ENCODE measurements at regions of chr10 and their contacts with region 1.

Region 1: DNA sequence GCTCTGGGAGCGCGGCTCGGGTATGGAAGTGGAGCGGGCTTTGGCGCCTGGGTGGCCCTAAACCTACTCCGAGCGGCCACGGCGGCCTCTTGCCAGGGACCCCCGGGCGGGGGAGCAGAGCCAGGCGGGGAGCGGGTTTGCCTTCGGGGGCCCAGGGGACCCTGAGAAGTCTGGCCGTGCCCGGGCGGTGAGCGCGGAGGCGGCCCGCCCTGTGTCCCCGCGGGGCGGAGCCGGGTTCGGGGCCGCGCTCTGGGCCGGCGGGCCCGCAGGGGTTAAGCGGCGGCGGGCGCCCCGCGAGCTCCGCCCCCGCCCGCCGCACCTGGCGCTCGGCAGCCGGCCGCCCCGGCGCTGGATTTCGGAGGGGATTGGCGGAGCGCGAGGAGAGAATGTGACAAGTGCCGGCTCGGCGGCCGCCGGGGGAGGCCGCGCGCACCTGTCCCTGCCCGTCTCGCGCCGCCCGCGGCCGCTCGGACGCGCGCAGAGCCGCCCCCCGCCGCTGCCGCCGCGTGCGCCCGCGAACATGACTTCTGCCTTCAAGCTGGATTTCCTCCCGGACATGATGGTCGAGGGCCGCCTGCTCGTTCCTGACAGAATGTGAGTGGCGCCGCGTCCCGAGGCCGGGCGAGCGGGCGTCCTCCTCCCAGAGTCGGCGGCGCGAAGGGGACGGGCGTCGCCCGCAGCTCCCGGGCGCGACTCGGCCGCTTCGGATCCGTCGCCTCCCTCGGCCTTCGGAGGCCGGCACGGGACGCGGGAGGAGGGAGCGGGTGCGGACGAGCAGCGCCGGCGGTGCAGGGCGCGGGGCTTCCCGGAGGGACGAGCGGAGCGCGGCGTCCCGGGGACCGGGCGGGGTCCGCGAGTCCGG is at the start of gene CELF2:
- DNase-seq: peak; percentile 64
- H3K4me3 ChIP-seq: peak within 1 kb of the TSS; percentile 77 to 91 (median 88)
- H3K27ac ChIP-seq: peak within 1 kb of the TSS; percentile 71
- H3K4me1 ChIP-seq: peaks cover 9% of the 10 kb centered on the region
- H3K27me3 ChIP-seq: no peaks in the 10 kb centered on the region
- CTCF ChIP-seq: no peak
- POLR2A ChIP-seq: peak; percentile 26
- total RNA-seq, gene CELF2: 35.5 and 42.6 TPM in 2 replicates

Region 2: GRCh38 chr10:10613656-10614244 is 404.1 kb before region 1 on chr10:
- CTCF ChIA-PET with region 1: no interaction called
- POLR2A ChIA-PET with region 1: no interaction called
- dilution Hi-C with region 1: no loop called
- intact Hi-C with region 1: loop called (anchors 5 kb)
- DNase-seq: peak; percentile 27
- H3K4me3 ChIP-seq: no peak overlapping the region
- H3K27ac ChIP-seq: no peak overlapping the region
- H3K4me1 ChIP-seq: peaks cover 6% of the 10 kb centered on the region
- H3K27me3 ChIP-seq: peaks cover 6 to 27% of the 10 kb centered on the region in 2 experiments
- CTCF ChIP-seq: no peak
- POLR2A ChIP-seq: no peak

Region 3: GRCh38 chr10:10792681-10793080 is 225.1 kb before region 1 on chr10:
- CTCF ChIA-PET with region 1: interaction called, 3 read pairs
- POLR2A ChIA-PET with region 1: interaction called, 3 read pairs
- dilution Hi-C with region 1: no loop called
- intact Hi-C with region 1: loop called (anchors 5 kb)
- DNase-seq: peak; percentile 89
- H3K4me3 ChIP-seq: no peak overlapping the region
- H3K27ac ChIP-seq: peak overlapping the region; percentile 98
- H3K4me1 ChIP-seq: peaks cover 43% of the 10 kb centered on the region
- H3K27me3 ChIP-seq: no peaks in the 10 kb centered on the region
- CTCF ChIP-seq: no peak
- POLR2A ChIP-seq: peak; percentile 53

Region 4: GRCh38 chr10:10847317-10847912 is 170.4 kb before region 1 on chr10:
- CTCF ChIA-PET with region 1: no interaction called
- POLR2A ChIA-PET with region 1: no interaction called
- dilution Hi-C with region 1: no loop called
- intact Hi-C with region 1: no loop called
- DNase-seq: no peak
- H3K4me3 ChIP-seq: no peak overlapping the region
- H3K27ac ChIP-seq: no peak overlapping the region
- H3K4me1 ChIP-seq: no peaks in the 10 kb centered on the region
- H3K27me3 ChIP-seq: no peaks in the 10 kb centered on the region
- CTCF ChIP-seq: no peak
- POLR2A ChIP-seq: no peak

Region 5: GRCh38 chr10:11209830-11210181 is 192.0 kb after region 1 on chr10:
- CTCF ChIA-PET with region 1: no interaction called
- POLR2A ChIA-PET with region 1: no interaction called
- dilution Hi-C with region 1: no loop called
- intact Hi-C with region 1: no loop called
- DNase-seq: peak; percentile 85
- H3K4me3 ChIP-seq: no peak overlapping the region
- H3K27ac ChIP-seq: peak overlapping the region; percentile 71
- H3K4me1 ChIP-seq: peaks cover 36% of the 10 kb centered on the region
- H3K27me3 ChIP-seq: no peaks in the 10 kb centered on the region
- CTCF ChIP-seq: no peak
- POLR2A ChIP-seq: no peak

Measured in endothelial cell of umbilical vein (primary cell).